Lower lobe of right lung (tissue), 2 donors: ENCODE measurements at regions of chr11 and their contacts with region 1.

Region 1: DNA sequence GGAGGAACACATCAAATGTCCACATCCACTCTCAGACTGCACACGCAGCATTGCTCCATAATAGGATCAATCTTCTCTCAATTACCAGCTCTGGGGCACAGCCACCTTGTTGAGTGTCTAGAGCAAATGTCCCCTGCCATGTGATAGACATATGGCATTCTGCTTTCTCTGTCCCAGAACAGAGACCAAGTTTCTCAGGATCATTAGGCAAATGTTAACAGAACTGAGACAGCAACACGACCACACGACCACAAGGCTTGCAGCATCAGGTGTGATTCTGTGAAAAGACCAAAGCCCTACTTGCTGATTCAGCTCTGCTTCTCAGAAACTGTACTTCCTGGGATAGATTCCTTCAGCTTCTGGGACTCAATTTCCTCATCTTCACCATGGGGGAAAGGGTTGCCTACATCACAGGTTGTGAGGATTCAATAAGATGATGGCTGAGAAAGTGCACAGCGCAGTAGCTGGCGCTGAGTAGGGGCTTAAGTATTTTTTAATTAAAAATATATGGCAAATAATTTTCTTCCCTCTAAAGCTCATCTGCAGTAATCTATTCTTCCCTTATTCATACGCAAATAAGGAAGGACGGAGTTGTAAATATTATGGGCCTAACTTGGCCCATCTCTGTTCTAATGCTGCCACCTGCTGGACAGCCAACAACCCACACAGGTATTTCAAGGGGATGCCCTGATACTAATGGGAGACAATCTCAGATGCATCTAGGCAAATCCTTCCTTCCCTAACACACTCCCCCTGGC is 54.3 kb upstream of the USP47 start:
- DNase-seq: peak; percentile 66
- ATAC-seq: peak; percentile 90 to 92
- H3K4me3 ChIP-seq: no peak overlapping the region
- H3K27ac ChIP-seq: no peak overlapping the region
- H3K4me1 ChIP-seq: no peaks in the 10 kb centered on the region
- H3K27me3 ChIP-seq: no peaks in the 10 kb centered on the region
- CTCF ChIP-seq: peak; percentile 90

Region 2: GRCh38 chr11:11032066-11032465 is 755.4 kb before region 1 on chr11:
- intact Hi-C with region 1: loop called (anchors 5 kb)
- DNase-seq: no peak
- ATAC-seq: no peak
- H3K4me3 ChIP-seq: no peak overlapping the region
- H3K27ac ChIP-seq: no peak overlapping the region
- H3K4me1 ChIP-seq: no peaks in the 10 kb centered on the region
- H3K27me3 ChIP-seq: no peaks in the 10 kb centered on the region
- CTCF ChIP-seq: no peak